PC-3 (cell line): ENCODE measurements at regions of chr7 and their contacts with region 1.

Region 1: DNA sequence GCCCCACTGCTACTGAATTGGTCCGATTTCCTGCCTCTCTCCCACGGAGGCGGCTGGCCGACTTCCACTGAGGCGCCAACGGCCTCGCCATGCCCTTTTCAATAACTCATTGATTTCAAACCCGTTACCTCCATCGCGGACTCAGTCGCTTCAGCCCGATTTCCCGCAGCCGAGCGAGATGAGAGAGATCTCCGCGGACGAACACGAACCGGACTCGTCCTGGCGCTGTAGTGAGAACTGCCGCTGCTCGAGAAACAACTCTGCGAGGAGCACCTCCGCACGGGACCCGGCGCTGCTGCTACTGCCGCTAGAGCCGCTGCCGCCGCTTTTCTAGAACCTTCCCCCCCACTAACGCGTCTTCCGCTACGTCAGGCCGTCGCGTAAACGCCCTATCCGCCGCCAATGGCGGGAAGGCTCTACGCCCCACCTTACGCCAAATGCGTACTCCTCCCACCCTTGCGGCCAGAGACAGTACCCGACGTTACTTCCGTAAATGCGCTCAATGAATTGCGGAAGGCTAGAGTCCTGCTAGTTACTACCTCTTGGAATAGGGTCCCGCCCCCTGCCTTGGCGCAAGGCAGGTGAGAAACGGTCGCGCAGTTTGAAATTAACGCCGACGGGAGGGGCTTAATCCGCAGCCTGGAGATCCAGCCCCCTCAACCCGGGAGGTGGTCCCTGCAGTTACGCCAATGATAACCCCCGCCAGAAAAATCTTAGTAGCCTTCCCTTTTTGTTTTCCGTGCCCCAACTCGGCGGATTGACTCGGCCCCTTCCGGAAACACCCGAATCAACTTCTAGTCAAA is at the start of gene HNRNPA2B1:
- DNase-seq: peak; percentile 98
- ATAC-seq: peak; percentile 80
- H3K4me3 ChIP-seq: peak within 1 kb of the TSS; percentile 99
- H3K27ac ChIP-seq: peak within 1 kb of the TSS; percentile 95
- H3K4me1 ChIP-seq: peaks cover 35% of the 10 kb centered on the region
- H3K27me3 ChIP-seq: no peaks in the 10 kb centered on the region
- CTCF ChIP-seq: no peak
- total RNA-seq, gene HNRNPA2B1: 304 and 457 TPM in 2 replicates

Region 2: GRCh38 chr7:25732766-25733217 is 467.9 kb before region 1 on chr7:
- CTCF ChIA-PET with region 1: no interaction called
- POLR2A ChIA-PET with region 1: no interaction called
- intact Hi-C with region 1: no loop called
- DNase-seq: no peak
- ATAC-seq: no peak
- H3K4me3 ChIP-seq: no peak overlapping the region
- H3K27ac ChIP-seq: no peak overlapping the region
- H3K4me1 ChIP-seq: no peaks in the 10 kb centered on the region
- H3K27me3 ChIP-seq: peaks cover 54% of the 10 kb centered on the region
- CTCF ChIP-seq: no peak

Region 3: DNA sequence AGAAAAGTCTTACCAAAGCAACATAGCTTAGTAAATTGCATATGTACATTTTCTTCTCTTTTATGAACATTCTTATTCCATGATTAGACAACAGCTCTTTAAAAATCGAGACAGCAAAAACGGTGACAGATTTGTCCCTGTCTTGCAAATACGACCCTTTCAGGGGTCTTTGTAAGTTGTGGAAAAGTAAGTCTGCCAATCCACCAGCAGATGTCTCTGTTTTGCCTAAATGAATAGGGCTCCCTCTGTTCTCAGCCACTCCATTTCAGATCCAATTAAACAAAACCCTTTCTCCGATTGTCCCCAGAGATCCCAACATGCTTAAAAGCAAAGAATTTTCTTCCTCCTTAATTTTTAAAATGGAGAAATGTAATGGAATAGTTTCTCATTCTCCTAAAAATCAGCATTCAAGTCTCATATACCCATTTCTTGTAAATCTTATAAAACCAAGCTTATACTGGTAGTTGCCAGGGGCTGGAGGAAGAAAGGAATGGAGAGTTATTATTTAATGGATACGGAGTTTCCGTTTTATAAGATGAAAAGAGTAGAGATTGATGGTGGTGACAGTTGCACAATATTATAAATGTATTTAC is 109.6 kb before region 1 on chr7:
- CTCF ChIA-PET with region 1: no interaction called
- POLR2A ChIA-PET with region 1: no interaction called
- intact Hi-C with region 1: loop called (anchors 1 kb)
- DNase-seq: peak; percentile 60
- ATAC-seq: peak; percentile 89
- H3K4me3 ChIP-seq: peak overlapping the region; percentile 26; the same call in 1 of the 2 replicates
- H3K27ac ChIP-seq: no peak overlapping the region
- H3K4me1 ChIP-seq: peaks cover 8% of the 10 kb centered on the region
- H3K27me3 ChIP-seq: no peaks in the 10 kb centered on the region
- CTCF ChIP-seq: peak; percentile 88

Region 4: DNA sequence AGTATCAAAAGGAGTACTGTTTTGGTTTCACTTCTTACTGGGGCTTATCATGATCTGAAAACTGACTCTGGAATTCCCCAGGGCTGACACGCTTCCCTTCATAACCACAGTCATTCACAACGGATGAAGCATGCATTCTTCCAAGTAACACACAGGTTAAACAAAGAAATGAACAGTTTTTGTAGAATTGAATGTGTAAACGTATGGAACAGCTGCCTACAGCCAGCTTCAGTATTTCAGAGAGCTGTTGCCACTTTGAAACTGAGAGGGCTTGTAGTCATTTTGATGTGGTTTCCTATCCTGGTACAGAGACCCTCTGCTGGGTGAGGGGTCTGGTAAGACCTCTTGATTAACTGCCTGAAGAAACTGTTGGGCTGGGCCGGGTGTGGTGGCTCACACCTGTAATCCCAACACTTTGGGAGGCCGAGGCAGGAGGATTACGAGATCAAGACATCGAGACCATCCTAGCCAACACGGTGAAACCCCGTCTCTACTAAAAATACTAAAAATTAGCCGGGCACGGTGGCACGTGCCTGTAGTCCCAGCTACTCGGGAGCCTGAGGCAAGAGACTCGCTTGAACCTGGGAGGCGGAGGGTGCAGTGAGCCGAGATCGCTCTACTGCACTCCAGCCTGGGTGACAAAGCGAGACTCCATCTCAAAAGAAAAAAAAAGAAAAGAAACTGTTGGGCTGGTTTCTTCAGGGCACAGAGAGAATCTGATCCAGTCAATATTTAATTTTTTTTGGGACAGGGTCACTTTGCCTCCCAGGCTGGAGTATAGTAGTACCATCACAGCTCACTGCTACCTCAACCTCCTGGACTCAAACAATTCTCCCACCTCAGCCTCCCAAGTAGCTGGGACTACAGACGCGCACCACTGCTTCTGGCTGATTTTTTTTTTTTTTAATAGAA is 43.9 kb before region 1 on chr7:
- CTCF ChIA-PET with region 1: no interaction called
- POLR2A ChIA-PET with region 1: interaction called, 4 read pairs
- intact Hi-C with region 1: loop called (anchors 1 kb)
- DNase-seq: peak; percentile 93
- ATAC-seq: peak; percentile 48
- H3K4me3 ChIP-seq: peak overlapping the region; percentile 62; the same call in 1 of the 2 replicates
- H3K27ac ChIP-seq: peak overlapping the region; percentile 96
- H3K4me1 ChIP-seq: peaks cover 74% of the 10 kb centered on the region
- H3K27me3 ChIP-seq: no peaks in the 10 kb centered on the region
- CTCF ChIP-seq: no peak

Region 5: GRCh38 chr7:26216049-26216448 is 15.4 kb after region 1 on chr7:
- CTCF ChIA-PET with region 1: no interaction called
- POLR2A ChIA-PET with region 1: no interaction called
- intact Hi-C with region 1: no loop called
- DNase-seq: no peak
- ATAC-seq: peak; percentile 32
- H3K4me3 ChIP-seq: no peak overlapping the region
- H3K27ac ChIP-seq: no peak overlapping the region
- H3K4me1 ChIP-seq: no peaks in the 10 kb centered on the region
- H3K27me3 ChIP-seq: no peaks in the 10 kb centered on the region
- CTCF ChIP-seq: no peak

Region 6: DNA sequence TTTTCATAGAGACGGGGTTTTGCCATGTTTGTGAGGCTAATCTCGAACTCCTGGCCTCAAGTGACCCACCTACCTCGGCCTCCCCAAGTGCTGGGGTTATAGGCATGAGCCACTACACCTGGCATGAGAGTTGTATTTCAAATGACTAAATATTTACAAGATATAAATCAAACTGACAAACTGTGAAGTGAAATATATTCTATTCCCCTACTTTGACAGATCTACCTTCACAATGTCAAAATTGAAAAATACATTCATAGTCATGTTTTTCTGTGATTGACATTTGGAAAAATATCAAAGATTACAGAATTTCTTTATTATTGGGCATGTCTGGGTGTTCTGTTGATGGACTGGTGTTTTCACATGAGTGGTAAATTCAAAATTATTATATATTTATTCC is 74.6 kb after region 1 on chr7:
- CTCF ChIA-PET with region 1: no interaction called
- POLR2A ChIA-PET with region 1: no interaction called
- intact Hi-C with region 1: no loop called
- DNase-seq: no peak
- ATAC-seq: no peak
- H3K4me3 ChIP-seq: no peak overlapping the region
- H3K27ac ChIP-seq: no peak overlapping the region
- H3K4me1 ChIP-seq: no peaks in the 10 kb centered on the region
- H3K27me3 ChIP-seq: no peaks in the 10 kb centered on the region
- CTCF ChIP-seq: no peak

Region 7: DNA sequence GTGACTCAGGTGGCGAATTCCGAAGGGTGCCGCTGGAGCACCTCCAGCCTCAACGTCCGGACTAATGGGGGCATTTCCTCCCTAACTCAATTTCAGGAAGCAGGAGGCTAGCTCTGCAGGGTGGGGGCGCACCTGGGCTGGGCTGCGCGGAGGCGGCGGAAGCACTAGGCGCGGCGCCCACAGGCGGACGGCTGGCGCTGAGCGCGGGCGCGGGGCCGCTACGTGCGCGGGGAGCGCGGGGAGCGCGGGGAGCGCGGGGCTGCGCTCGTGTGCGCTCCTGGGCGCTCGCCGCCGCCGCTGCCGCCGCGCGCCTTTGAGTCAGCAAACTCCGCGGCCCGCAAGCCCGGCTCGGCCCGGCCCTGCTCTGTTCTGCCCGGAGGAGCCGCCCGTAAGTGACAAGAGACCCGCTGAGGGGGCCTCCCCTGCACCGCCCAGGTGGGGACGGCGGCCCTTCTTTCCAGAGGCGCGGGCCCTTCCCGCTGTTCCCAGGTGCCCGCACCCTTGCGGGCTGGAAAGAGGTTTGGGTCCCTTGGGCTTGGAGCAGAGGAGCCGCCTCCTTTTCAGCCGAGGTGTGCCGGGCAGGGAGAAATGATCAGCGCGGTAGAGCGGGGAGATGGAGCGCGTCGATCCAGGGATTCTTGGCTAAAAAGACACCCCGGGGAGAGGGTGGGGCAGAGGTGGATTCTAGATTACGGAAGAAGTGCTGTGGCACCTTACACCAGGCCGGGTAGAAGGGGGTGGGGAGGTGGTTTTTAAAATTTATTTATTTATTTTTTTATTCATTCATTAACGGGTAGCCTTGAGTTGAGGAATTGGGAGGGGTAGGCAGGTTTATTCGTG is 91.3 kb after region 1 on chr7 and contains the start of gene SNX10:
- CTCF ChIA-PET with region 1: interaction called, 3 read pairs
- POLR2A ChIA-PET with region 1: interaction called, 4 read pairs
- intact Hi-C with region 1: loop called (anchors 5 kb)
- DNase-seq: peak; percentile 72
- ATAC-seq: peak; percentile 89
- H3K4me3 ChIP-seq: peak within 1 kb of the TSS; percentile 97
- H3K27ac ChIP-seq: no peak within 1 kb of the TSS
- H3K4me1 ChIP-seq: peaks cover 6% of the 10 kb centered on the region; the same call in 1 of the 2 replicates
- H3K27me3 ChIP-seq: no peaks in the 10 kb centered on the region
- CTCF ChIP-seq: peak; percentile 54
- total RNA-seq, gene SNX10: 6.2 and 7.9 TPM in 2 replicates